Posterior cingulate gyrus (tissue), 11 donors: ENCODE measurements at regions of chr17 and their contacts with region 1.

Region 1: GRCh38 chr17:74790161-74791054 is 14.3 kb upstream of the NAT9 start:
- DNase-seq: no peak

Region 2: GRCh38 chr17:74736513-74737298 is 53.7 kb before region 1 on chr17 and contains the start of gene RAB37:
- intact Hi-C with region 1: no loop called
- DNase-seq: peak in 3 of 10 donors; percentile 61 to 83 (median 66)

Region 3: GRCh38 chr17:74864866-74865395 is 74.5 kb after region 1 on chr17:
- intact Hi-C with region 1: loop called (anchors 1 kb)
- DNase-seq: peak; percentile 73 to 98 (median 88)